Activated CD4-positive, alpha-beta T cell treated with anti-CD3 and anti-CD28 coated beads for 36 hours (primary cell): ENCODE measurements at regions of chr1 and their contacts with region 1.

Region 1: DNA sequence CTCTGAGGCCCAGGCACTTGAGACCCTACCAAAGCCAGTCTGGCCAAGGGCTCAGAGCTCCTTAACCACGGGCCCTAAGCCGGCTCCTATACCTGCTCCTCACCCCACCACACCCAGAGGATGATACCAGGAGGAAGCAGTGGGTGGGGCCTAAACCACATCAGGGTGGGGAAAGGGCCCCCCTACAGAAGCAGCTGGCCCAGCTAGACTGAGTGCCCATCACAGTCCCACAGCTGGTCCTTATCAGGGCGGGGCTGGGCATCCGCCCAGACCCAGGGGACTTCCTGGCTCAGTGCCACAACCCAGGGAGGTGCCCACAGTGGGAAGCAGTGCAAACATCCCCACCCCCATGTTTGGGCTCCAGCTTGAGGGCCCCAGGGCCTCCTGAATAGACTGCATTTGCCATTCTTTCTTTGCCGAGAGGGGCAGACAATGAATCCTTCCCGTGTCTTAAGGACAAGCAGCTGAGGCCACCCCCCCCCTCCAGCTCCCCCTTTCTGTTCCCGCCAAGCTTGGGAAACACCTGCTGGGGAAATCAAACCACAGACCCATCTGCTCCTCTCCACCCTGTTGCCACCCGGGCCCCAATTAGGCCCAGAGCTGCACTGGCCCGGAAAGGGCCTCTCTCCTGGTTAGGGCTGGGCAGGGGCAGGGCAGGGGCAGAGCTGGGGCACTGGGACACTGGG is 6.2 kb downstream of the E2F2 start:
- DNase-seq: peak; percentile 39
- ATAC-seq: no peak
- H3K4me3 Mint-ChIP-seq: peak overlapping the region; percentile 28
- H3K27ac Mint-ChIP-seq: peak overlapping the region; percentile 25
- H3K4me1 Mint-ChIP-seq: peaks cover 63% of the 10 kb centered on the region
- H3K27me3 Mint-ChIP-seq: no peaks in the 10 kb centered on the region

Region 2: DNA sequence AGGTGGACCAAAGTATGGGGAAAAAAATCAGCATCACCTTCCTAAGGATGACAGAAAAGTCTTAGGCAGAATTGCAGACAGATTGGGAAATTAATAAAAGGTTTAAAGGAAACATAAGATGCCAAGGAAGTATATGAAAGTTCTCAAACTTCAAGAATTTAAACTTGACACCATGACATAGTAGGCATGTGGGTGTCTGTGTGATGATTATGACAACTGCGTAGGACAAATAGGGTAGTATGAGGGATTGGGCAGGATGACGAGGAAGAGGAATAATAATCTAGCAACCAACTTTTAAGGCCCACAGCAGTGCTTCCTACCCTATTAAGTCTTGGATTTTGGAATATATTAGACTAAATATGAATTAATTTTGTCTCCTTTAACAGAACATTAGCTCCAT is 233.2 kb before region 1 on chr1:
- CTCF ChIA-PET with region 1: no interaction called
- POLR2A ChIA-PET with region 1: no interaction called
- intact Hi-C with region 1: no loop called
- DNase-seq: no peak
- ATAC-seq: no peak
- H3K4me3 Mint-ChIP-seq: no peak overlapping the region
- H3K27ac Mint-ChIP-seq: no peak overlapping the region
- H3K4me1 Mint-ChIP-seq: no peaks in the 10 kb centered on the region
- H3K27me3 Mint-ChIP-seq: no peaks in the 10 kb centered on the region

Region 3: DNA sequence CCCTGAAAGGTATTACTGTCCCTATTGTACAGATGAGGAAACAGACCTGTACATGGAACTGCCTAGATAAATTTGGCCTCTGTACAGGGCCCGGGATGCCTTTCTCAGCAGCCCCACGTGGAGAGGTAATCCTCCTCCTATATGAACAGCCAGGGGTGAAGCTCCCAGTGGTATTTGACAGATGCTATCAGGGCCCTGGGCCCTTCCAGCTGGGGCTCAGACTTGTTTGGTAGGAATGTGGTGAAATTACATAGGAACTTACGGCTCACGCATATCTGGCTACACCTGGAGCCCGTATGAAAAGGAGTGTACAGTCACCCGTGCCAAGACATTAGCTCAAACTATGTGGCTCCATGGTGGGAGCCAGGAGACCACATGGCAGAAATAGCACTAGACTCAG is 75.6 kb before region 1 on chr1:
- CTCF ChIA-PET with region 1: interaction called, 3 read pairs
- POLR2A ChIA-PET with region 1: interaction called, 15 read pairs
- intact Hi-C with region 1: no loop called
- DNase-seq: no peak
- ATAC-seq: no peak
- H3K4me3 Mint-ChIP-seq: no peak overlapping the region
- H3K27ac Mint-ChIP-seq: no peak overlapping the region
- H3K4me1 Mint-ChIP-seq: peaks cover 13% of the 10 kb centered on the region
- H3K27me3 Mint-ChIP-seq: no peaks in the 10 kb centered on the region

Region 4: DNA sequence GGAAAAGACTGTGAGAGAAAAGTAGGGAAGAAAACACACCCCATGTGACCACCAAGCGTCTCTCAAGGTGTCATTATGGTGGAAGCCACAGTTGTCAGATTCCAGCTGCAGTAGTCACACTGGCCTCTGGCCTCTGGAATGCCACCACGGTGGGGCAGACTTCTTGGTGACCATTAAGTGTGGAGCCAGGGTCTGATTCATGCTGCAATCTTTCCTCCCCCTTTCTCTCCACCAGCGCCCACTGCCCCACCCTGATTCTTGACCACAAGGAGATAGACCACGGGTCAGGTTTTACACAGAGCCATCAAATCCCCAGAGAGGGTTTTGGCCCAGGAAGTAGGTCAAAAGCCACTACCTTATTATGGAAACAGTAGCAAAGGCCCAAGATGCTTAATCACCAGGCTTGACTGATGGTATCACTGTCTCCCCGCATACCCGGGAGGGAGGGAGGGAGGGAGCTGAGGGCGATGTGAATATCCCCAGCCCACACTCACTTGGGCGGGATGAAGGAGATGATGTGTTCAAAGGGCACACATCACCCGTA is 741.6 kb after region 1 on chr1:
- CTCF ChIA-PET with region 1: no interaction called
- POLR2A ChIA-PET with region 1: no interaction called
- intact Hi-C with region 1: no loop called
- DNase-seq: no peak
- ATAC-seq: no peak
- H3K4me3 Mint-ChIP-seq: no peak overlapping the region
- H3K27ac Mint-ChIP-seq: no peak overlapping the region
- H3K4me1 Mint-ChIP-seq: no peaks in the 10 kb centered on the region
- H3K27me3 Mint-ChIP-seq: peaks cover 13% of the 10 kb centered on the region